ENCODE measurements at regions of chr2 and their contacts with region 1.

Region 1: GRCh38 chr2:100610381-100610831 is 47.6 kb downstream of the PDCL3 start:
- DNase-seq: peak; percentile 72 to 87 (median 79)
- ATAC-seq: peak; percentile 95
- H3K4me3 ChIP-seq: no peak overlapping the region
- H3K4me3 Mint-ChIP-seq: no peak overlapping the region
- H3K27ac ChIP-seq: no peak overlapping the region
- H3K27ac Mint-ChIP-seq: no peak overlapping the region
- H3K4me1 ChIP-seq: peaks cover 10% of the 10 kb centered on the region
- H3K4me1 Mint-ChIP-seq: peaks cover 12% of the 10 kb centered on the region
- H3K27me3 ChIP-seq: no peaks in the 10 kb centered on the region
- H3K27me3 Mint-ChIP-seq: peaks cover 6% of the 10 kb centered on the region
- CTCF ChIP-seq: peak; percentile 89

Region 2: DNA sequence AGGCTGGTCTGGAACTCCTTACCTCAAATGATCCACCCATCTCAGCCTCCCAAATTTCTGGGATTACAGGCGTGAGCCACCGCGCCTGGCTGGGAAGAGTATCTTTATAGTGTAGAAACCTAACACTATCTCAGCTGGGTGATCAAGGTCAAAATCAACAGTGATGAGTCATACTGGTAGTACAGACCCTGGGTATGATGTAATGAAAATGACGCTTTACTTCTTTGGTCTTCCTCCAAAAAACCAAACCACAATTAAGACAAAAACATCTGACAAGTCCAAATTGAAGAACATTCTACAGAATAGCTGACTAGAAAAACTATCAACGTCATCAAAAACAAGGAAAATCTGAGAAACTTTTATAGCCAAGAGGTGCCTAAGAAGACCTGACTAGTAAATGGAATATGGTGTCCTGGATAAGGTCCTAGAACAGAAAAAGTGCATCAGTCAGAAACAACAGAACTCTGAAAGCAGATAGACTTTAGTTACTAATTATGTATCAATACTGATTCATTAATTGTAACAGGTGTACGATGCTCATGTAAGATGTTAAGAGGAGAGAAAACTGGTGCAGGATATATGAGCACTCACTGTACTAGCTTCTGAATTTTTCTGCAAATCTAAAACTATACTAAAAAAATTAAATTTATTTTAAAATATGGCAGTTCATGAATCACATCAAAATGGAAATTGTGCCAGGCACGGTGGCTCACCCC is 22.2 kb before region 1 on chr2:
- CTCF ChIA-PET with region 1: interaction called, 12 read pairs
- POLR2A ChIA-PET with region 1: no interaction called
- intact Hi-C with region 1: no loop called
- DNase-seq: peak in 6 of 14 experiments; percentile 8 to 84 (median 52)
- ATAC-seq: peak; percentile 88
- H3K4me3 ChIP-seq: no peak overlapping the region
- H3K4me3 Mint-ChIP-seq: no peak overlapping the region
- H3K27ac ChIP-seq: no peak overlapping the region
- H3K27ac Mint-ChIP-seq: peak overlapping the region; percentile 32
- H3K4me1 ChIP-seq: peaks cover 9% of the 10 kb centered on the region
- H3K4me1 Mint-ChIP-seq: peaks cover 31% of the 10 kb centered on the region
- H3K27me3 ChIP-seq: no peaks in the 10 kb centered on the region
- H3K27me3 Mint-ChIP-seq: no peaks in the 10 kb centered on the region
- CTCF ChIP-seq: no peak

Region 3: GRCh38 chr2:100653449-100654035 is 43.1 kb after region 1 on chr2:
- CTCF ChIA-PET with region 1: interaction called, 10 read pairs
- POLR2A ChIA-PET with region 1: no interaction called
- intact Hi-C with region 1: no loop called
- DNase-seq: peak in 13 of 14 experiments; percentile 18 to 81 (median 31)
- ATAC-seq: peak; percentile 94
- H3K4me3 ChIP-seq: no peak overlapping the region
- H3K4me3 Mint-ChIP-seq: peak overlapping the region; percentile 65
- H3K27ac ChIP-seq: no peak overlapping the region
- H3K27ac Mint-ChIP-seq: peak overlapping the region; percentile 93
- H3K4me1 ChIP-seq: peaks cover 28% of the 10 kb centered on the region
- H3K4me1 Mint-ChIP-seq: peaks cover 57% of the 10 kb centered on the region
- H3K27me3 ChIP-seq: no peaks in the 10 kb centered on the region
- H3K27me3 Mint-ChIP-seq: no peaks in the 10 kb centered on the region
- CTCF ChIP-seq: no peak

Region 4: DNA sequence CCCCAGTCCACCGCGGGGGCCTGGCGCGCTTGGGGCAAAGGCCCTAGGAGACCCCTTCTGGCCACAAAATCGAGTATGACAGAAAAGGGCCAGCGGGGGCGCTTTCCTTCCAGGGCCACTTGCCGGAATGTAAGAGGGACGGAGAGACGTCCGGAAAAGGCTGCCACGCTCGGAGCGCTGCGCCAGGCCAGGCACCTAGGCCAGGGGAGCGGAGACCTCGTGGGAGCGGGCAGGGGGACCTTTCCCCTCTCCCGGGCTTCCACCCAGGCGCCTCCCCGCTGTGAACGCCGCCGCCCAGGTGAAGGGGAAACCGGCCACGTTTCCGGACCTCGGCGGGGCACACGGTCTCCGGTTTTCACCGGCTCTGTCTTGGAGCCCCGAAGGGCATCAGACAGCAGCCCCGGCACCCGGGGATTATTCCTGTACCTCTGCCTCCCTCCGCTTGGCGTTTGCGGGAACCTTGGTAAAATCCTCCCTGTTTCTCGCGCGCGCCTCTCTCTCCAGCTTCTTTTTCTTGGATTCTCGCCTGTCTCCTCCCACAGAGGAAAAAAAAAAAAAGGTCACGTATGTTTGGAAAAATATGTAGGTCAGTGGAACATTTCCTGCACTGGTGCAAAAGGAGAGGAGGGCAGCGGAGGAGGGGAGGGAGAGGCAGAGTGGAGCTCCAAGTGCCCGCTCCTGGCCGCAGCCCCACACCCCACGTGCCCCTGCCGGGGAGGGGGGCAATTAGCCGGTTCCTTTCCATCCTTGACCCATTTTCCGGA is 208.4 kb after region 1 on chr2:
- CTCF ChIA-PET with region 1: no interaction called
- POLR2A ChIA-PET with region 1: no interaction called
- intact Hi-C with region 1: loop called (anchors 2 to 5 kb)
- DNase-seq: peak in 7 of 14 experiments; percentile 5 to 37 (median 17)
- ATAC-seq: peak; percentile 24
- H3K4me3 ChIP-seq: peak overlapping the region; percentile 50
- H3K4me3 Mint-ChIP-seq: peak overlapping the region; percentile 87
- H3K27ac ChIP-seq: no peak overlapping the region
- H3K27ac Mint-ChIP-seq: peak overlapping the region; percentile 69
- H3K4me1 ChIP-seq: peaks cover 22% of the 10 kb centered on the region
- H3K4me1 Mint-ChIP-seq: peaks cover 25% of the 10 kb centered on the region
- H3K27me3 ChIP-seq: peaks cover 15 to 19% of the 10 kb centered on the region in 2 experiments
- H3K27me3 Mint-ChIP-seq: peaks cover 39% of the 10 kb centered on the region
- CTCF ChIP-seq: no peak

Region 5: DNA sequence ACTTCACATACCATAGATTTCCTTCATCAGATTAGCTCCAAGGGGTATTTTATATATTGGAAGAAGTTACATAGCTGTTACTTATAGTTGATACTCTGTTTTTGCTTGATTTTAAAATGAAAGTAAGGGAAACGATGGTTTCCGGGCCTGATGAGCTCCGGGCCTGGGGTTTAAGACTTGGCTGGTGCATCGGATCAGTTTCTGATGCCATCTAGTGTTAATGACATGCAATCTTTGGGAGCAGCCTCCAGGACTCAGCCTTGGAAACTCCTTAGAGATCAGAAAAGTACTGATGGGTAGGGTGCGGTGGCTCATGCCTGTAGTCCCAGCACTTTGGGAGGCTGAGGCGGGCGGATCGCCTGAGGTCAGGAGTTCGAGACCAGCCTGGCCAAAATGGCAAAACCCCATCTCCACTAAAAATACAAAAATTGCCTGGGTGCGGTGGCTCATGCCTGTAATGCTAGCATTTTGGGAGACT is 595.2 kb after region 1 on chr2:
- CTCF ChIA-PET with region 1: no interaction called
- POLR2A ChIA-PET with region 1: no interaction called
- intact Hi-C with region 1: loop called (anchors 2 to 10 kb)
- DNase-seq: peak in 13 of 14 experiments; percentile 15 to 77 (median 26)
- ATAC-seq: peak; percentile 92
- H3K4me3 ChIP-seq: no peak overlapping the region
- H3K4me3 Mint-ChIP-seq: peak overlapping the region; percentile 79
- H3K27ac ChIP-seq: peak overlapping the region in 1 of 2 donors; percentile 24
- H3K27ac Mint-ChIP-seq: peak overlapping the region; percentile 85
- H3K4me1 ChIP-seq: peaks cover 10% of the 10 kb centered on the region
- H3K4me1 Mint-ChIP-seq: peaks cover 14% of the 10 kb centered on the region
- H3K27me3 ChIP-seq: no peaks in the 10 kb centered on the region
- H3K27me3 Mint-ChIP-seq: no peaks in the 10 kb centered on the region
- CTCF ChIP-seq: peak; percentile 69

Measured in CD4-positive, alpha-beta T cell (primary cell).